Posterior vena cava (tissue), 2 donors: ENCODE measurements at regions of chr13 and their contacts with region 1.

Region 1: DNA sequence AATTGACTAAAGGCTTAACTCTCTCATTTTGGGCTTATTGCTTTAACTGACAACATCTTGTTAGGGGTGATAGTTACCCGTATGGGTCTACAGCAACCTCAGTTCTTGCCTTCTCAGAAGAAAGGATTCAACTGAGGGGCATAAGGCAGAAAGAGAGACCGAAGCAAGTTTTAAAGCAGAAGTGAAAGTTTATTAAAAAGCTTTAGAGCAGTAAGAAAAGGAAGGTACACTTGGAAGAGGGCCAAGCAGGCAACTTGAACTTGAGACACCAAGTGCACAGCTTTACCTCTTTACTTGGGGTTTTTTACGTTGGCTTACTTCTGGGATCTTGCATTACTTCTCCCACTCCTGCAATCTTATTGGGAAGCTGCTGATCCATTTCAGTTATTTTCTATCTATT is 246.9 kb upstream of the PRR20A start:
- DNase-seq: no peak

Region 2: GRCh38 chr13:56424246-56424645 is 469.6 kb before region 1 on chr13:
- intact Hi-C with region 1: no loop called
- DNase-seq: no peak

Region 3: GRCh38 chr13:56586966-56587365 is 306.9 kb before region 1 on chr13:
- intact Hi-C with region 1: loop called in 1 of 2 experiments (anchors 5 kb)
- DNase-seq: no peak

Region 4: DNA sequence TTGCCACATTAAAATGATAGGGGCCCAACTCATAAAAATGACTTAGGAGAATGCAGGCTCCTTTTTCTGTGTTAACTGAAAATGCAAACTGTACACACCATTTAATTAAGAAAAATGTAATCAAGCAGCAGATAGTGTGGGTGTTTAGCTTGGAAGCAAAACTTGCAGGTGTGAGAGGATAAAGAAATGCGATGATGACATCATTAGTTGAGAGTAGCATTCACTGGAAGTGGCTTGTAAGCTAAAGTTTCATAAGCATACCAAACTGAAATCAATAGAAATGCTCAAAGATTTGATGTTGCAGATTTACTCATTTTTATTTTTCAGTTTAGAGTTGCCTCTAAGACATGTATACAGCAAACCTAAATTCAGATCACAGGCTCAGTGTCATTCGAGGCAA is 359.7 kb after region 1 on chr13:
- intact Hi-C with region 1: no loop called
- DNase-seq: no peak